PC-3 (cell line): ENCODE measurements at regions of chr11 and their contacts with region 1.

Region 1: DNA sequence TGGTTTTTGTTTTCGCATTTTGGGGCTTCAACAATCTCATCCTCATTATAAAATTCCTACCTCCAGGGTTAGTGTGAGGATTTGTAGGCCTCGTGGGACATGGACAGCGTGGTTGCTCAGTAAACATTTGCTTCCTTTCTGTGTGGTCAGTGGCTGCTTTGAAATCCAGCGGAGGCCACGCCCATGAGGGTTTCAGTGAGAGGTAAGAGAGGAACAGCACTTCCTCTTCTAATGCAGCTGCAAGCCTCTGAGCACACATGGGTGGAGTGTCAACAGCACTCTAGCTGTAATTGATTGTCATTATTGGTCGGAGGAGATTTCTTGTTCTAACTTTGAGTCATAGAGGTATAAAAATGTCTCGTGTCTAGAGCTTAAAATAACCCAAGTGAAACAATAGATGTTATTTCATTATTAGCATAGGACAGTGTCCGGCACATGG is 6.0 kb upstream of the ARHGAP42 start:
- DNase-seq: peak; percentile 91
- ATAC-seq: peak; percentile 78
- H3K4me3 ChIP-seq: no peak overlapping the region
- H3K27ac ChIP-seq: peak overlapping the region; percentile 89
- H3K4me1 ChIP-seq: peaks cover 51% of the 10 kb centered on the region
- H3K27me3 ChIP-seq: no peaks in the 10 kb centered on the region
- CTCF ChIP-seq: no peak

Region 2: GRCh38 chr11:100719809-100720221 is 38.7 kb after region 1 on chr11:
- CTCF ChIA-PET with region 1: no interaction called
- POLR2A ChIA-PET with region 1: no interaction called
- intact Hi-C with region 1: loop called (anchors 1 kb)
- DNase-seq: peak; percentile 94
- ATAC-seq: peak; percentile 92
- H3K4me3 ChIP-seq: peak overlapping the region; percentile 10; the same call in 1 of the 2 replicates
- H3K27ac ChIP-seq: peak overlapping the region; percentile 78
- H3K4me1 ChIP-seq: peaks cover 28% of the 10 kb centered on the region
- H3K27me3 ChIP-seq: no peaks in the 10 kb centered on the region
- CTCF ChIP-seq: no peak

Region 3: DNA sequence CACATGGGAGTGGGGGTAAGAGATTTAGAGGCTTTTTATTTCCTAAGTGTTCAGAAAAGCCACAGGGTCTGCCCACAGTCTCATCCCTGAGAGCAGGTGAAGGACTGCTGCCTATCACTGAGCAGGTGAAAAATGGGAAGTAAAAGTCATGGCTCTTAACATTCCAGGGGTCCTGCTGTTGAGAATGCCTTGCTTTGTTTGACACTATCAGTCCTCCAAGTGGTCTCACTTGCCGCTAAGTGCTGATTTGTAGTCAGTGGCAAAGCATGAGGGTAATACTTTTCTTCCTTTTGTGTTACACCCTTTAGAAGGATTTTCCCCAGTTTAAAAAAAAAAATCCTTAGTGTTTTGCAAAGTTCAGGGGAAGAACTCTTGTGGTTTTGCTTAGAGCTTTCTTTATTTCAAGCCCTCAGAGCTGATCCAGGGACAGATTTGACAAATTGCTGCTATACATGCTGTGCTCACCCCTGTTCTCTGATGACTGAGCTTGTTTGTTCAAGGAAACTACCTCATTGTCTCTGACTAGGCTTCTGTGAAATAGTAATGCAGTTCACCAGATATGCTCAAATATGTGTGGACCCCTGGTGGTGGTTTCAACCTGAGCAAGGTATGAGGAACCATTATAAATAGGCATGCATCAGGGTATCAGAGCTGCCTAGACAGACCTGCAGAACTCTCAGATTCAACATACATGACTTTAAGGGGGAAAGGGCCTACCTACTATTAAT is 147.0 kb after region 1 on chr11:
- CTCF ChIA-PET with region 1: interaction called, 10 read pairs
- POLR2A ChIA-PET with region 1: interaction called, 5 read pairs
- intact Hi-C with region 1: loop called (anchors 1 kb)
- DNase-seq: peak; percentile 97
- ATAC-seq: peak; percentile 86
- H3K4me3 ChIP-seq: no peak overlapping the region
- H3K27ac ChIP-seq: peak overlapping the region; percentile 93
- H3K4me1 ChIP-seq: peaks cover 46% of the 10 kb centered on the region
- H3K27me3 ChIP-seq: no peaks in the 10 kb centered on the region
- CTCF ChIP-seq: peak; percentile 85

Region 4: GRCh38 chr11:100930185-100930778 is 249.2 kb after region 1 on chr11:
- CTCF ChIA-PET with region 1: interaction called, 3 read pairs
- POLR2A ChIA-PET with region 1: no interaction called
- intact Hi-C with region 1: loop called (anchors 1 kb)
- DNase-seq: peak; percentile 89
- ATAC-seq: peak; percentile 35
- H3K4me3 ChIP-seq: peak overlapping the region; percentile 0; the same call in 1 of the 2 replicates
- H3K27ac ChIP-seq: peak overlapping the region; percentile 55; the same call in 1 of the 2 replicates
- H3K4me1 ChIP-seq: peaks cover 31% of the 10 kb centered on the region
- H3K27me3 ChIP-seq: no peaks in the 10 kb centered on the region
- CTCF ChIP-seq: peak; percentile 92

Region 5: DNA sequence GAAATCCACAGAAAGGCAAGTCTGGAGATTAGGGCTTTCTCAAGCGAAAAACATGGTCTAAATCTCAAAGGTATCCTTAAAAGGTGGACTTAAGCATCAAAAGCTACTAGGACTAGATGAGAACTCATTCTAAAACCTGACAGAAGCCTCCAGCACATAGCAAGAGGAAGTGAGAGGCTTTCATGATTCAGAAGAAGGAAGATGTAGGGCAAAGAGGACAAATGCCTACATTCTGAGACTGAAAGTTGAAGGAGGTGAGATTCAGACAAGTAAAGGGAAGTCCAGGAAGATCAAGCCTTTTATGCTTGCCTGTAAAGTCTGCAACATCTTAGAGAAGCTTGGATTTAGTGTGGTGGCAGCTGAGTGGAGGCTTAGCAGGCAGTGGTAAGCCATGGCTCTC is 349.6 kb after region 1 on chr11:
- CTCF ChIA-PET with region 1: no interaction called
- POLR2A ChIA-PET with region 1: no interaction called
- intact Hi-C with region 1: no loop called
- DNase-seq: no peak
- ATAC-seq: no peak
- H3K4me3 ChIP-seq: no peak overlapping the region
- H3K27ac ChIP-seq: no peak overlapping the region
- H3K4me1 ChIP-seq: no peaks in the 10 kb centered on the region
- H3K27me3 ChIP-seq: peaks cover 40% of the 10 kb centered on the region
- CTCF ChIP-seq: no peak